B cell (primary cell): ENCODE measurements at regions of chr2 and their contacts with region 1.

Region 1: GRCh38 chr2:46062637-46063412 is 234.4 kb upstream of the EPAS1 start:
- DNase-seq: peak; percentile 68
- ATAC-seq: peak; percentile 49
- H3K4me3 ChIP-seq: no peak overlapping the region
- H3K4me3 Mint-ChIP-seq: no peak overlapping the region
- H3K27ac ChIP-seq: no peak overlapping the region
- H3K27ac Mint-ChIP-seq: no peak overlapping the region
- H3K4me1 ChIP-seq: no peaks in the 10 kb centered on the region
- H3K4me1 Mint-ChIP-seq: no peaks in the 10 kb centered on the region
- H3K27me3 ChIP-seq: no peaks in the 10 kb centered on the region
- H3K27me3 Mint-ChIP-seq: no peaks in the 10 kb centered on the region
- CTCF ChIP-seq: peak; percentile 80

Region 2: GRCh38 chr2:45643543-45644542 is 419.0 kb before region 1 on chr2:
- CTCF ChIA-PET with region 1: interaction called, 5 read pairs
- POLR2A ChIA-PET with region 1: no interaction called
- intact Hi-C with region 1: loop called (anchors 2 kb)
- DNase-seq: peak; percentile 86
- ATAC-seq: peak; percentile 96
- H3K4me3 ChIP-seq: peak overlapping the region in 4 of 5 experiments; percentile 35 to 54 (median 51)
- H3K4me3 Mint-ChIP-seq: peak overlapping the region; percentile 83
- H3K27ac ChIP-seq: peak overlapping the region in 1 of 2 donors; percentile 54
- H3K27ac Mint-ChIP-seq: no peak overlapping the region
- H3K4me1 ChIP-seq: peaks cover 13 to 19% of the 10 kb centered on the region in 2 donors
- H3K4me1 Mint-ChIP-seq: peaks cover 17% of the 10 kb centered on the region
- H3K27me3 ChIP-seq: peaks cover 0 to 16% (median 6%) of the 10 kb centered on the region in 4 experiments
- H3K27me3 Mint-ChIP-seq: peaks cover 29% of the 10 kb centered on the region
- CTCF ChIP-seq: peak; percentile 89

Region 3: DNA sequence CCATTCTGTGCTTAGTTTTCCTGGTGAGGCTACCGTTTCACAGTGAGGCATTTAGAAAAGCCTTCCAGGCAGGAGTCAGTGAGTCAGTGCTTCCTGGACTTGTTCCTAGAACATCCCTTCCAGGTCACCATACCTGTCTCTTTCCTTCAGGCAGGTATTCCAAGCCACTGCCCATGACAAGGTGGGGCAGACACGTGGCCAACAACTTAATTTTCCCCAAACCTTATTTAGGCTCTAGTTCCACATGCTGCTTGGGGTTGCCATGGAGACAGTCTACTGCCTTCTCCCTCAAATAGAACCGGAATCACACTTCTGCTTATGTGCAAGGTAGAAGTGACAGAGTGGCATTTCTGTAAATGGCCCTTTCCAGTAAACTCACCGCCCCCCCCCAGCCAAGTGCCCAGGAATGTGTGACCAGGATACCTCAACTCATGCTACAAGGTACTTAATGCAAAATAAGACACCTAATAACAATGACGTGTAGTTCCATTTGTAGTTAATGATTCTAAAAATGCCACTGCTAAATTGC is 153.1 kb before region 1 on chr2:
- CTCF ChIA-PET with region 1: no interaction called
- POLR2A ChIA-PET with region 1: no interaction called
- intact Hi-C with region 1: no loop called
- DNase-seq: peak; percentile 86
- ATAC-seq: peak; percentile 83
- H3K4me3 ChIP-seq: no peak overlapping the region
- H3K4me3 Mint-ChIP-seq: peak overlapping the region; percentile 48
- H3K27ac ChIP-seq: peak overlapping the region; percentile 43 to 85
- H3K27ac Mint-ChIP-seq: peak overlapping the region; percentile 59
- H3K4me1 ChIP-seq: peaks cover 49 to 63% of the 10 kb centered on the region in 2 donors
- H3K4me1 Mint-ChIP-seq: peaks cover 82% of the 10 kb centered on the region
- H3K27me3 ChIP-seq: no peaks in the 10 kb centered on the region
- H3K27me3 Mint-ChIP-seq: no peaks in the 10 kb centered on the region
- CTCF ChIP-seq: no peak

Region 4: DNA sequence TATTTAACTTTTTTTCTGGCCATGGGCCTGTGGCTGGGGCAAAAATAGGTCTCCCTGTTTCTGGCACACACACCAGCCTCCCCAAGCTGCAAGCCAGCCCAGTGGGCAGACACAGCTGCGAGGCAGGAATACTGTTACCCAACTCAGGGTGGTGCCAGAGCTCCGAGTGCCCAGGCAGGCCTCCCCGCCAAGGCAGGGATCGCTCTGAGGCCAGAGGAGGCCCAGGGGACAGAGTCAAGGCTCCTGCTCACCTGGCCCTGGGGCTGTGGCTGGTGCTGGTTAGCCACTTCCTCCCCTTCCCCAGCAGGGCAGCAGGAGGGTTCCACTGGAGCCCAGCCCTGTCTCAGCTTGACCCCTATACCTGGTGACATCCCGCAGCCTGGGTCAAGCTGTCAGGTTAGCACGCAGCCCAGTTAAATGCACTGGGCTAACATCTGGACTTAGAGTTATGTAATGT is 167.3 kb after region 1 on chr2:
- CTCF ChIA-PET with region 1: no interaction called
- POLR2A ChIA-PET with region 1: no interaction called
- intact Hi-C with region 1: no loop called
- DNase-seq: no peak
- ATAC-seq: no peak
- H3K4me3 ChIP-seq: no peak overlapping the region
- H3K4me3 Mint-ChIP-seq: no peak overlapping the region
- H3K27ac ChIP-seq: no peak overlapping the region
- H3K27ac Mint-ChIP-seq: no peak overlapping the region
- H3K4me1 ChIP-seq: no peaks in the 10 kb centered on the region
- H3K4me1 Mint-ChIP-seq: no peaks in the 10 kb centered on the region
- H3K27me3 ChIP-seq: peaks cover 0 to 3% (median under 1%) of the 10 kb centered on the region in 4 experiments
- H3K27me3 Mint-ChIP-seq: peaks cover 13% of the 10 kb centered on the region
- CTCF ChIP-seq: no peak

Region 5: GRCh38 chr2:46461011-46461674 is 398.3 kb after region 1 on chr2:
- CTCF ChIA-PET with region 1: interaction called, 6 read pairs
- POLR2A ChIA-PET with region 1: no interaction called
- intact Hi-C with region 1: loop called (anchors 1 kb)
- DNase-seq: peak; percentile 82
- ATAC-seq: peak; percentile 79
- H3K4me3 ChIP-seq: peak overlapping the region in 3 of 5 experiments; percentile 16 to 24 (median 20)
- H3K4me3 Mint-ChIP-seq: peak overlapping the region; percentile 70
- H3K27ac ChIP-seq: peak overlapping the region; percentile 2 to 55
- H3K27ac Mint-ChIP-seq: peak overlapping the region; percentile 77
- H3K4me1 ChIP-seq: peaks cover 13 to 21% of the 10 kb centered on the region in 2 donors
- H3K4me1 Mint-ChIP-seq: peaks cover 21% of the 10 kb centered on the region
- H3K27me3 ChIP-seq: no peaks in the 10 kb centered on the region
- H3K27me3 Mint-ChIP-seq: peaks cover 7% of the 10 kb centered on the region
- CTCF ChIP-seq: peak; percentile 98

Region 6: DNA sequence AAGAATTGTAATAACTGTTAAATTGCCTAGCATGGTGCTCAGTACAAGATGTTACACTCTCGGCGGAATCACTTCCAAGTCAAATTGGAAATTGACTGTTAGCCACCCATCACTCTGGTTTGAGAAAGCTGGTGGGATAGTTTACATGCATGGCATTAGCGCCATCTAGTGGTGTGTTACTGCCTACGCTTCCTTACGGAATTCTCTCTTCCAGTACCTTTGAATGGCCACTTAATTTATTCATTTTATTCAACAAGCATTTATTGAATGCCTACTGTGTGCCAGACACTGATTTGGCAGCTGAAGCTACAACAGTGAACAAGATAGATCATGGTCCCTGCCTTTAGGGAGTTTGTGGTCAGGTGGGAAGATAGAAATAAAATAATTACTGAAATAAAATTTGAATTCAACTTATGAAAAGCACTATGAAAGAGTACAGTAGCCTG is 587.8 kb after region 1 on chr2:
- CTCF ChIA-PET with region 1: interaction called, 22 read pairs
- POLR2A ChIA-PET with region 1: no interaction called
- intact Hi-C with region 1: no loop called
- DNase-seq: peak; percentile 83
- ATAC-seq: peak; percentile 70
- H3K4me3 ChIP-seq: no peak overlapping the region
- H3K4me3 Mint-ChIP-seq: no peak overlapping the region
- H3K27ac ChIP-seq: no peak overlapping the region
- H3K27ac Mint-ChIP-seq: no peak overlapping the region
- H3K4me1 ChIP-seq: no peaks in the 10 kb centered on the region
- H3K4me1 Mint-ChIP-seq: no peaks in the 10 kb centered on the region
- H3K27me3 ChIP-seq: no peaks in the 10 kb centered on the region
- H3K27me3 Mint-ChIP-seq: peaks cover 6% of the 10 kb centered on the region
- CTCF ChIP-seq: peak; percentile 97